Natural killer cell (primary cell): ENCODE measurements at regions of chr2 and their contacts with region 1.

Region 1: GRCh38 chr2:102449370-102449974 is 23.6 kb upstream of the SLC9A4 start:
- DNase-seq: peak; percentile 55 to 77
- ATAC-seq: peak in 2 of 3 donors; percentile 64 to 80
- H3K4me3 ChIP-seq: no peak overlapping the region
- H3K4me3 Mint-ChIP-seq: no peak overlapping the region
- H3K27ac ChIP-seq: no peak overlapping the region
- H3K27ac Mint-ChIP-seq: peak overlapping the region; percentile 29 to 31
- H3K4me1 ChIP-seq: peaks cover 11% of the 10 kb centered on the region
- H3K4me1 Mint-ChIP-seq: peaks cover 24% of the 10 kb centered on the region in 2 donors
- H3K27me3 ChIP-seq: no peaks in the 10 kb centered on the region
- H3K27me3 Mint-ChIP-seq: no peaks in the 10 kb centered on the region
- CTCF ChIP-seq: peak; percentile 78

Region 2: DNA sequence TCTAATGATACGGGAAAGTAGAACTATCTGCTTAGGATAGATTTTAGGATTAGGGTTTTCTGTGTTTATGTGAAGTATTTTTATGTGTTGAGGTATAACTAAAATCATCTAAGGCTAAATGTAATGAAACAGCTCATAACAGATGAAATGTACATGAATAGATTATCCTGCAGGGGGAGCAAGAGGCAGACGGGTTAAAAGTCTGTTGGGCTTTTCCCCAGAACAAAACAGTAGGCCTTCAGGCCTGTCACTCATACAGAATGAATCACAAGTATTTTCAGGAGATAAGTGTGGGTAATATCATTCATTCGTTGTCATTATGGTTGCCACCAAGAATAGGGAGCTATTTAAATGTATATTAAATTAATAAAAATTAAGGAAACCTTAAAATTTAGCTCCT is 565.6 kb before region 1 on chr2:
- intact Hi-C with region 1: loop called (anchors 1 kb)
- DNase-seq: peak in 1 of 2 donors; percentile 65
- ATAC-seq: peak; percentile 81 to 85 (median 81)
- H3K4me3 ChIP-seq: no peak overlapping the region
- H3K4me3 Mint-ChIP-seq: no peak overlapping the region
- H3K27ac ChIP-seq: no peak overlapping the region
- H3K27ac Mint-ChIP-seq: no peak overlapping the region
- H3K4me1 ChIP-seq: no peaks in the 10 kb centered on the region
- H3K4me1 Mint-ChIP-seq: no peaks in the 10 kb centered on the region
- H3K27me3 ChIP-seq: no peaks in the 10 kb centered on the region
- H3K27me3 Mint-ChIP-seq: no peaks in the 10 kb centered on the region
- CTCF ChIP-seq: peak; percentile 66

Region 3: GRCh38 chr2:102005989-102006885 is 443.2 kb before region 1 on chr2:
- intact Hi-C with region 1: loop called (anchors 5 kb)
- DNase-seq: peak in 1 of 2 donors; percentile 68
- ATAC-seq: peak in 2 of 3 donors; percentile 55 to 58
- H3K4me3 ChIP-seq: no peak overlapping the region
- H3K4me3 Mint-ChIP-seq: peak overlapping the region; percentile 3
- H3K27ac ChIP-seq: no peak overlapping the region
- H3K27ac Mint-ChIP-seq: no peak overlapping the region
- H3K4me1 ChIP-seq: peaks cover 36% of the 10 kb centered on the region
- H3K4me1 Mint-ChIP-seq: peaks cover 2 to 18% of the 10 kb centered on the region in 2 donors
- H3K27me3 ChIP-seq: peaks cover 16% of the 10 kb centered on the region
- H3K27me3 Mint-ChIP-seq: peaks cover 42 to 50% of the 10 kb centered on the region in 2 donors
- CTCF ChIP-seq: peak; percentile 69

Region 4: GRCh38 chr2:102020596-102021181 is 428.8 kb before region 1 on chr2:
- intact Hi-C with region 1: loop called (anchors 1 kb)
- DNase-seq: peak; percentile 76 to 86
- ATAC-seq: peak; percentile 95 to 100 (median 99)
- H3K4me3 ChIP-seq: no peak overlapping the region
- H3K4me3 Mint-ChIP-seq: no peak overlapping the region
- H3K27ac ChIP-seq: no peak overlapping the region
- H3K27ac Mint-ChIP-seq: no peak overlapping the region
- H3K4me1 ChIP-seq: peaks cover 12% of the 10 kb centered on the region
- H3K4me1 Mint-ChIP-seq: peaks cover 0 to 6% of the 10 kb centered on the region in 2 donors
- H3K27me3 ChIP-seq: no peaks in the 10 kb centered on the region
- H3K27me3 Mint-ChIP-seq: peaks cover 31 to 60% of the 10 kb centered on the region in 2 donors
- CTCF ChIP-seq: peak; percentile 97

Region 5: GRCh38 chr2:102301867-102302362 is 147.6 kb before region 1 on chr2:
- intact Hi-C with region 1: loop called (anchors 1 kb)
- DNase-seq: peak; percentile 24 to 77
- ATAC-seq: peak; percentile 96 to 100 (median 96)
- H3K4me3 ChIP-seq: no peak overlapping the region
- H3K4me3 Mint-ChIP-seq: peak overlapping the region; percentile 15
- H3K27ac ChIP-seq: no peak overlapping the region
- H3K27ac Mint-ChIP-seq: peak overlapping the region in 1 of 2 donors; percentile 46
- H3K4me1 ChIP-seq: peaks cover 3% of the 10 kb centered on the region
- H3K4me1 Mint-ChIP-seq: peaks cover 13 to 17% of the 10 kb centered on the region in 2 donors
- H3K27me3 ChIP-seq: no peaks in the 10 kb centered on the region
- H3K27me3 Mint-ChIP-seq: peaks cover 15 to 16% of the 10 kb centered on the region in 2 donors
- CTCF ChIP-seq: peak; percentile 56

Region 6: GRCh38 chr2:102520801-102521200 is 71.3 kb after region 1 on chr2:
- intact Hi-C with region 1: no loop called
- DNase-seq: no peak
- ATAC-seq: no peak
- H3K4me3 ChIP-seq: no peak overlapping the region
- H3K4me3 Mint-ChIP-seq: no peak overlapping the region
- H3K27ac ChIP-seq: no peak overlapping the region
- H3K27ac Mint-ChIP-seq: peak overlapping the region in 1 of 2 donors; percentile 55
- H3K4me1 ChIP-seq: peaks cover 43% of the 10 kb centered on the region
- H3K4me1 Mint-ChIP-seq: peaks cover 55 to 56% of the 10 kb centered on the region in 2 donors
- H3K27me3 ChIP-seq: no peaks in the 10 kb centered on the region
- H3K27me3 Mint-ChIP-seq: no peaks in the 10 kb centered on the region
- CTCF ChIP-seq: no peak